ENCODE measurements at regions of chr15 and their contacts with region 1.

Region 1: GRCh38 chr15:70559265-70560239 is 203.8 kb downstream of the UACA start:
- DNase-seq: peak; percentile 88
- H3K4me3 Mint-ChIP-seq: no peak overlapping the region
- H3K27ac Mint-ChIP-seq: no peak overlapping the region
- H3K4me1 Mint-ChIP-seq: peaks cover 9% of the 10 kb centered on the region
- H3K27me3 Mint-ChIP-seq: no peaks in the 10 kb centered on the region

Region 2: DNA sequence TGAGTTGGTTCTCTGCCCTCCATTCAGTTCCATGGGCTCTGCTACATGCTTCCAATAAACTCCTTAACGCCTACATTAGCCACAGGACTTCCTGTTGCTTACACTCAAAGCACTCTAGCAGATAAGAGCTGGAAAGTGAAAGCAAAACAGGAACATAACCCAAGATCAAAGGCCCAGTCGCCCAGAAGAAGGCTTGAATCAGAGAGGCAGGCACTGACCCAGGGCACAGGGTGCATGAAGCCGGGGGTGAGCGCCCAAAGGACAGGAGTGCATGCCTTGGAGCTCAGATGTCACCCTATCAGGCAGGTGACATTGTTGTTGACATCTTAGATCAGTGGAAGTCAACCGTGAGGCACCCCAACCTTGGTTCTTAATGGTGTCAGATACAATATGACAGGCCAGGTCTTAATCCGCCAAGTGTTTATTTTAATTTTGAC is 31.3 kb before region 1 on chr15:
- CTCF ChIA-PET with region 1: no interaction called
- POLR2A ChIA-PET with region 1: no interaction called
- intact Hi-C with region 1: loop called (anchors 1 kb)
- DNase-seq: peak; percentile 79
- H3K4me3 Mint-ChIP-seq: peak overlapping the region; percentile 33
- H3K27ac Mint-ChIP-seq: peak overlapping the region; percentile 52
- H3K4me1 Mint-ChIP-seq: peaks cover 60% of the 10 kb centered on the region
- H3K27me3 Mint-ChIP-seq: no peaks in the 10 kb centered on the region

Region 3: DNA sequence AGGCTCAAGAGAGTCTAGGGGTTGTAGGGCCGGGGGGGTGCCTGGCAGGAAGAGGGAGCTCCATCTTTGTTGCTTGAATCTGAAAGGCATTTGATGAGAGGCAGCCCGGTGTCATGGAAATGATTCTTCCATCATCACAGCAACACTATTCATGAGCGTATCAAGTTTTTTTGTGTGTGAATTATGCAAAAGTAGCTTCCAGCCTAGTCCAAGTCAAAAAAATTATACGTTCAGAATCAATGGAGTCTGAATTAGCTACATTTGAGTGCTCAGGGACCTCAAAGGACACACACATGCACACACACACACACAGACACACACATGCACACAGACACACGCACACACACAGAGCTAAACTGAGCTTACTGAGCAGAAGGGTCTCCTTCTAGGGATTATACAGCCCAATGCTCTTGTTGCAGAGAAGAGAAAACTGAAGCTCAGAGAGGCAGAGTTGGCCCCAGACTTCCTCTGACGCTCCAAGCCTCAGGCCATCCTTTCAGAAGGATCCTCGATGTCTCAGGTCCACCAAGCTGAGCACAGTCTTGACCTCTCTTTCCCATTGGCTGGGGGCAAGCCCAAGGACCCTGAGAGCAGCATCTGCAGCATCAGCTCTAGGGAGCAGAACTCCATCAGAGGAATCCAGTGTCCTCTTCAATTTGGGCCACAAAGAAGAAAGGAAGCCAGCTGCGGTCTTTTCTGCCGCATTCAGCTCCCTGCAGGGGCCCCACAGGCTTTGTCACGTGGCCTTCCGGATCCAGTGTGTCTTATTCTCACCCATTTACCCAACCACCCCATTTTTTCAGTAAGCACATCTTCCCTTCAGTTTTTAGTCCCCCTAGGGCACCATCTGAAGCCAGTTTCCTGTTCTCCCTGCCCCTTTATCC is 24.2 kb before region 1 on chr15:
- CTCF ChIA-PET with region 1: interaction called, 4 read pairs
- POLR2A ChIA-PET with region 1: no interaction called
- intact Hi-C with region 1: loop called (anchors 2 kb)
- DNase-seq: peak; percentile 80
- H3K4me3 Mint-ChIP-seq: peak overlapping the region; percentile 78
- H3K27ac Mint-ChIP-seq: peak overlapping the region; percentile 85
- H3K4me1 Mint-ChIP-seq: peaks cover 48% of the 10 kb centered on the region
- H3K27me3 Mint-ChIP-seq: no peaks in the 10 kb centered on the region

Region 4: GRCh38 chr15:70545526-70545925 is 14.0 kb before region 1 on chr15:
- CTCF ChIA-PET with region 1: no interaction called
- POLR2A ChIA-PET with region 1: no interaction called
- intact Hi-C with region 1: loop called (anchors 1 kb)
- DNase-seq: no peak
- H3K4me3 Mint-ChIP-seq: no peak overlapping the region
- H3K27ac Mint-ChIP-seq: no peak overlapping the region
- H3K4me1 Mint-ChIP-seq: peaks cover 42% of the 10 kb centered on the region
- H3K27me3 Mint-ChIP-seq: no peaks in the 10 kb centered on the region

Region 5: GRCh38 chr15:70575231-70576226 is 16.0 kb after region 1 on chr15:
- CTCF ChIA-PET with region 1: no interaction called
- POLR2A ChIA-PET with region 1: no interaction called
- intact Hi-C with region 1: no loop called
- DNase-seq: no peak
- H3K4me3 Mint-ChIP-seq: no peak overlapping the region
- H3K27ac Mint-ChIP-seq: no peak overlapping the region
- H3K4me1 Mint-ChIP-seq: peaks cover 4% of the 10 kb centered on the region
- H3K27me3 Mint-ChIP-seq: peaks cover 3% of the 10 kb centered on the region

Region 6: DNA sequence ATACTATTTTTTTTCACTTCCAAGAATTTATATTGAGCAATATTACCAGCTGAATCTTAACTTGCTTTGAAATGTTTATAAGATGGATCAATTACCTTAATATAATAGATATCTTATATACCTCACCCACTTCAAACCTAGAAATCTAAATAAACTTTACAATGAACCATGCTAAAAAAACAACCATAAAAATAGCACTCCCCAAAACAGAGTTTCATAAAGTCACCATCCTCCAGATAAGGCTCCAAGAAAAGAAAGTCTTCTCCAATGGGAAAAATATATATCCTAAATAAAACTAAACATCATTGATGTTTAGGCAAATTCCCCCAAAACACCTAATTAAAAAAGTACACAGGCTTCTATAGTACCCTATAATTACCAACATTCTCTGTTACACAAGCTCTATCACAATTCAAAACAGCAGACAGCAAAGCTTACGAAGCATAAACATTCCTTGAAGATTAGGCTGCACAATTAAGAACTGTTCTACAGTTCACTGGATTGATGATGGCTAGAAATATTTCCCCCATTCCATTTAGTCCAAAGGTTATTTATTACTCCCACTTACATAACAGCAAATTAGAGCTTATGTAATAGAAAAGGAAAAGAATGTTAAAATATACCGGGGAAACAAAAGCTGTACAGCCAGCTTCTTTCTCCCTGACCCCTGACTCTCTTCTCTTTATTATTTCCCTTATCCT is 154.3 kb after region 1 on chr15:
- CTCF ChIA-PET with region 1: no interaction called
- POLR2A ChIA-PET with region 1: no interaction called
- intact Hi-C with region 1: no loop called
- DNase-seq: no peak
- H3K4me3 Mint-ChIP-seq: no peak overlapping the region
- H3K27ac Mint-ChIP-seq: no peak overlapping the region
- H3K4me1 Mint-ChIP-seq: no peaks in the 10 kb centered on the region
- H3K27me3 Mint-ChIP-seq: peaks cover 4% of the 10 kb centered on the region